A549 (cell line): ENCODE measurements at regions of chr16 and their contacts with region 1.

Region 1: GRCh38 chr16:4550591-4550990 is 5.5 kb upstream of the C16orf96 start:
- DNase-seq: no peak
- ATAC-seq: 0 out of 6 replicates have a peak, but pooled peaks of 1 of the 2 experiments have one; percentile 15
- H3K4me3 ChIP-seq: no peak overlapping the region
- H3K27ac ChIP-seq: no peak overlapping the region
- H3K4me1 ChIP-seq: no peaks in the 10 kb centered on the region
- CTCF ChIP-seq: no peak
- EP300 ChIP-seq: no peak
- POLR2A ChIP-seq: no peak
- RAD21 ChIP-seq: no peak

Region 2: DNA sequence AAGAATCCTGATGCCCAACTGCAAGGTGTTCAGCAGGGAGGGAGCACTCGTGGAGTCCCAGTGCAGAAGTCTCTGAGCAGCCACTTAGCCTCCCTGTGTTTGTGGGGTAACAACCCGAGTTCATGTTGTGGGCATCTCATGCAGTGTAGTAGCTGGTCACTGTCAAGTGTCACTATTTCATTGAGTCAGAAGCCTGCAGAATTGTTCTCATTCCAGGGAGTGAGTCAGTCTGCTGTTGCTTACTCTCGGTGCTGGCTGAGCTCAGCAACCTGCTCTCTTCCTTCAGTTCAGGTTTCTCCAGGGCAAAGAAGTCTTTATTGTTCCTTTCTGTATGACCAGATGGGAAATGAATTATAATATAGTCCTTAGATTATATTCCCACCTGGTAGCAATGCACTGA is 50.3 kb before region 1 on chr16:
- CTCF ChIA-PET with region 1: interaction called, 301 read pairs
- POLR2A ChIA-PET with region 1: no interaction called
- DNase-seq: peak; percentile 33 to 67
- ATAC-seq: peak; percentile 90 to 93
- H3K4me3 ChIP-seq: no peak overlapping the region
- H3K27ac ChIP-seq: peak overlapping the region in 1 of 2 experiments; percentile 44; a peak in 1 of 6 replicates
- H3K4me1 ChIP-seq: peaks cover 36% of the 10 kb centered on the region
- CTCF ChIP-seq: no peak
- EP300 ChIP-seq: no peak
- POLR2A ChIP-seq: no peak
- RAD21 ChIP-seq: no peak

Region 3: DNA sequence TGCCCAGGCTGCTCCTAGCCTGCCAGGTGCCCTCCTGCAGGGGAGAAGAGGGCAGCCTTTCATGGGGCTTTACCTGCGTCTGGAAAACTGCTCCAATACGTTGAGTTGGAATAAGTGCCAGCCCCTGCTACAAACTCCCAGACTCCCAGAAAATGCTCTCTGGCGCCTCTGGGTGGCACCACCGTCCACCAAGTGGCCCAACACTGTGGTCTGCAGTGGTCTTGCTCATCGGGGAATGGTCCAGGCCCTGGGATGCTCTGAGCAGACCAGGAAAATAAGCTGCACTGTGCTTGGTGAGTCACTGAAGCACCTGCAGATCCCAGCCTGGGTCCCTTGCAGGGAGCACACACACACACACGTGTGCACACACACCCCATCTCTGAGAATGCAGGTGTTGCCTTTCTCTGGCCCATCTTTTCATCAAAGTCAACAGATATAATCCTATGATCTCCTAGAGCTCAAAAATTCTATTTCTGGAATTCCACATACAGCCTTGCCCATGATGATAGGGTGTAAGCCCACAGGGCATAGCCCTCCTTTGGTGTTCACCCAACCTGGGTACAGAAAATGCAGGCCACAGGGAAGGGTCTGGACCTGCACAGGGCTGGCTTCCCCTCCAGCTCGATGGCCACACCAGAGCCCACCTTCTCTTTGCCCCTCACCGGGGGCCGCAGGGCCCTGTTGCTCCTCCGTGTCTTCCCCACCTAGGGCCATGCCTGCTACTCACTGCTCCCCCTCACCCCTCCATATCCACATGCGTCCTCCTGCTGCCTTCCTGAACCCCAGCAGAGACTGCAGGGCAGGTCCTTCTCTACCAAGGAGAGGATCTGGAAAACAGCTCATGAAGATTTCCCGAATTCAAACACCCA is 32.5 kb before region 1 on chr16:
- CTCF ChIA-PET with region 1: interaction called, 301 read pairs
- POLR2A ChIA-PET with region 1: no interaction called
- DNase-seq: peak; percentile 40 to 47
- ATAC-seq: peak; percentile 77 to 89; a peak in 4 of 6 replicates
- H3K4me3 ChIP-seq: no peak overlapping the region
- H3K27ac ChIP-seq: no peak overlapping the region
- H3K4me1 ChIP-seq: no peaks in the 10 kb centered on the region
- CTCF ChIP-seq: peak; percentile 55
- EP300 ChIP-seq: no peak
- POLR2A ChIP-seq: no peak
- RAD21 ChIP-seq: peak; percentile 69 to 80

Region 4: DNA sequence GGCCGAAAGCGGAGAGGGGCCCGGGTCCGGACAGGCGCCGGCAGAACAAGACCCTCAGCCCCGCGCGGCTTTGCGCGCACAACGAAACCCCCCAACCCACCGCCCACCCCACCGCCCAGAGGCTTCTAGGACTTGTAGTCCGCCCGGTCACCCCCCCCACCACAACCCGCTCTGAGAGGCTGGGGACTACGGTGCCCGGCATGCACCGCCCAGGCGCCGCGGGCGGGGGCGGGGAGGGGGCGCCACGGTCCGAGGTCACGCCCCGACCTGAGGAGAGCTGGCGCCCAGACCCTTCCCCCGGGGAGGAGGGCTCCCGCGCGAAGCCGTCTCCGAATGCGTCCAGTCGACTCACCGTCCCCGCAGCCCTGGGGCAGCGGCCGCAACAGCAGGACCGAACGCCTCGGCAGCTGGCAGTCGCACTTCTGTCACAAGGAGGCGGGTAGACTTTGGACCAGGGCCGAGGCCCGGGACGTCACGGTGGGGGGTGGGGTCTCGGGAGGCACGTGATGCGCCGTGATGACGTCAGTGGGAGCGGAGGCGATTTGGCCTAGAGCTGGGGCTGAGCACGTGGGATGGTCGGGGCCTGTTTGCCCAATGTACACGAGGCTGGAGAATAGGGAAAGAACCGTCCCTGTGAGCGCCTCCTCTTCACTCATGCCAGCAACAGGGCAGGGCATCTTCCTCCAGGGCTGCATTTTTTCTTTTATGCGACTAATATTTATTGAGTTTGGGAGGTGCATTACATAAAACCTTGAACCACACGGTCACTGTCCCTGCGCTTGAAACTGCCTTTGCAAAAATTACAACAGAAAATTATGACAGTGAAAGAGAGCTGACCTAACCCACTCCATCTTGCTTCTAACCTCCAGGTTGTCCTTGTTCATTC is 12.0 kb before region 1 on chr16 and contains the start of gene CDIP1:
- CTCF ChIA-PET with region 1: interaction called, 27 read pairs
- POLR2A ChIA-PET with region 1: interaction called, 4 read pairs
- DNase-seq: peak; percentile 88 to 96
- ATAC-seq: peak; percentile 85 to 87
- H3K4me3 ChIP-seq: peak within 1 kb of the TSS; percentile 51
- H3K27ac ChIP-seq: peak within 1 kb of the TSS; percentile 48 to 91
- H3K4me1 ChIP-seq: peaks cover 5% of the 10 kb centered on the region; the same call in 1 of the 3 replicates
- CTCF ChIP-seq: no peak
- EP300 ChIP-seq: no peak
- POLR2A ChIP-seq: peak; percentile 31; the same call in 1 of the 2 replicates
- RAD21 ChIP-seq: no peak
- polyA plus RNA-seq, gene CDIP1: 3.7 and 4.4 TPM in 2 replicates

Region 5: GRCh38 chr16:4561596-4561995 is 11.0 kb after region 1 on chr16:
- CTCF ChIA-PET with region 1: interaction called, 17 read pairs
- POLR2A ChIA-PET with region 1: no interaction called
- DNase-seq: no peak
- ATAC-seq: 0 out of 6 replicates have a peak, but pooled peaks of 1 of the 2 experiments have one; percentile 43
- H3K4me3 ChIP-seq: no peak overlapping the region
- H3K27ac ChIP-seq: no peak overlapping the region
- H3K4me1 ChIP-seq: no peaks in the 10 kb centered on the region
- CTCF ChIP-seq: no peak
- EP300 ChIP-seq: no peak
- POLR2A ChIP-seq: no peak
- RAD21 ChIP-seq: no peak

Region 6: DNA sequence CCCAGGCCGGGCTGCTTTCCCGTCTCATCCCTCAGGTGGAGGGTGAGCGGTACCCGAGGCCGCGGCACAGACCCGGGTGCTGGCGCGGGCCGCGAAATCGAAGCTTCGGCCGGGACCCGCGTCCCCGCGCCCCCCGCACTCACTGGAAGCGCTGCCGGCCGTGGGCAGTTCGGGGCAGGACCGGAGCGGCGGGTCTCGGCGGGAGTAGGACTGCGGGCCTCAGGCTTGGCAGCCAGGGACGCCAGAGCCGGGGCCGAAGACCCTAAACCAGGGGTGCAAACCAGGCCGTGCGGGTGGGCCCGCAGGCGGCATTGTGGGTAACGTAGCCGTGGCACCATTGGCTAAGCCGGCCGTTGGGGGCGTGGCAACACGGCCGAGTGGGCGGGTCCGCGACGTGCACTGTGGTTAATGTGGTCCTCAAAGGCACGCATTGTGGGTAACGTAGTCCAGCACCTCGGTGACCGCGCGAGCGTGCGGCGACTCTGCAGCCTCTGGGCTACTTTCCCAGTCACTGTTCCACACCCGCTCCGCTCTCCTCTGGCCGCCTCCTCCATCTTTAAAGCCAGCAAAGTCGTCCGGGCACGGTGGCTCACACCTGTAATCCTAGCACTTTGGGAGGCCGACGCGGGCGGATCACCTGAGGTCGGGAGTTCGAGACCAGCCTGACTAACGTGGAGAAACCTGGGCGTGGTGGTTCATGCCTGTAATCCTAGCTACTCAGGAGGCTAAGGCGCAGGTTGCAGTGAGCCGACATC is 216.5 kb after region 1 on chr16 and contains the start of gene ZNF500:
- CTCF ChIA-PET with region 1: no interaction called
- POLR2A ChIA-PET with region 1: no interaction called
- DNase-seq: peak; percentile 96 to 97
- ATAC-seq: peak; percentile 86 to 94
- H3K4me3 ChIP-seq: peak within 1 kb of the TSS; percentile 81
- H3K27ac ChIP-seq: peak within 1 kb of the TSS; percentile 84 to 98
- H3K4me1 ChIP-seq: peaks cover 17% of the 10 kb centered on the region; the same call in 2 of the 3 replicates
- CTCF ChIP-seq: no peak
- EP300 ChIP-seq: no peak
- POLR2A ChIP-seq: peak; percentile 75
- RAD21 ChIP-seq: no peak
- polyA plus RNA-seq, gene ZNF500: 4.6 and 4.7 TPM in 2 replicates

Region 7: GRCh38 chr16:4911831-4912417 is 361.3 kb after region 1 on chr16:
- CTCF ChIA-PET with region 1: no interaction called
- POLR2A ChIA-PET with region 1: no interaction called
- DNase-seq: no peak
- ATAC-seq: no peak
- H3K4me3 ChIP-seq: no peak overlapping the region
- H3K27ac ChIP-seq: no peak overlapping the region
- H3K4me1 ChIP-seq: peaks cover 3% of the 10 kb centered on the region; the same call in 2 of the 3 replicates
- CTCF ChIP-seq: no peak
- EP300 ChIP-seq: no peak
- POLR2A ChIP-seq: no peak
- RAD21 ChIP-seq: no peak